Right ventricle myocardium superior (tissue), 1 donor: ENCODE measurements at regions of chr9 and their contacts with region 1.

Region 1: GRCh38 chr9:15416880-15417279 is 5.8 kb upstream of the SNAPC3 start:
- DNase-seq: no peak
- ATAC-seq: no peak

Region 2: DNA sequence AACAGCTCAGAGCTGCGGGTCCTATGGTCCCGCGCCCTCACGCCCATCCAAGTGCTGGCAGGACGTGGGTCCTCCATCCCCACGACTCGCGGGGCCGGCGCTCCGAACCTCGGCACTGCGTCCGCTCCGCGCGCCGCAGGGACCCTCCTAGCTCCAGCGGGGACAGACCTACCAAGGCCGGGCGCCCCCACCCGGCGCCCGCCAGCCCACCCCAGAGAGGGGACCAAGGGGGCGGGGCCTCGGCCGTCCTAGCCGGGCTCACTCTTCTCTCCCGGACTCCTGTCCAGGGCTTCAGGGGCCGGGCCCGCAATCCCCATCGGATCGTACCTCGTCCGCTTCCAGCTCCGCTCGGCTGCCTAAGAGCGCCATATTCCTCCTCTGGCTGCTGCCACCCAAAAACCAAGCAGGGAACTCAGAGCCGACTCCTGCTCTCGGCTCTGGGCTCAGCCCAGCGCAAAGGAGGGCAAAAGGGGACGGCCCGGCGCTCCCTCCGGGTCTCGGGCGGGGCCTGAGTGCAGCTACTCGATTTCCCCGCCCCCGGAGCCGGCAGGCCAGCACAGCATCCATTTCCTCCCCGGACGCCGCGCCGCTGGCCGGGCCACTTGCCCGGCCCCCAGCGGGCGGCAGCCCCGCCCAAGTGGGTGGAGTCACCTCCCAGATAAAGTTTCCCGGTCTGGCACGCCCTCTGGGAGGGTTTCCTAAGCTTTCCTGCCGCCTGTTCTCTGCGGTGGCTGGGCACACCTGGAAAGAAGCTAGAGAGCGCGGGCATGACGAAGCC is 109.9 kb before region 1 on chr9 and contains the start of gene TTC39B:
- intact Hi-C with region 1: loop called (anchors 10 kb)
- DNase-seq: peak; percentile 96
- ATAC-seq: peak; percentile 99
- total RNA-seq, gene TTC39B: 1.3 TPM